ENCODE measurements at regions of chr2 and their contacts with region 1.

Region 1: GRCh38 chr2:19120941-19121750 is 237.3 kb downstream of the OSR1 start:
- DNase-seq: peak; percentile 51 to 80
- H3K4me3 ChIP-seq: no peak overlapping the region
- H3K27ac ChIP-seq: peak overlapping the region; percentile 45
- H3K4me1 ChIP-seq: peaks cover 32% of the 10 kb centered on the region
- H3K27me3 ChIP-seq: no peaks in the 10 kb centered on the region
- CTCF ChIP-seq: no peak

Region 2: GRCh38 chr2:18829251-18829902 is 291.8 kb before region 1 on chr2:
- CTCF ChIA-PET with region 1: interaction called, 8 read pairs
- POLR2A ChIA-PET with region 1: no interaction called
- intact Hi-C with region 1: loop called (anchors 5 kb)
- DNase-seq: peak; percentile 55 to 99
- H3K4me3 ChIP-seq: peak overlapping the region; percentile 15; the same call in 1 of the 2 replicates
- H3K27ac ChIP-seq: peak overlapping the region; percentile 82
- H3K4me1 ChIP-seq: peaks cover 86% of the 10 kb centered on the region
- H3K27me3 ChIP-seq: no peaks in the 10 kb centered on the region
- CTCF ChIP-seq: no peak

Region 3: DNA sequence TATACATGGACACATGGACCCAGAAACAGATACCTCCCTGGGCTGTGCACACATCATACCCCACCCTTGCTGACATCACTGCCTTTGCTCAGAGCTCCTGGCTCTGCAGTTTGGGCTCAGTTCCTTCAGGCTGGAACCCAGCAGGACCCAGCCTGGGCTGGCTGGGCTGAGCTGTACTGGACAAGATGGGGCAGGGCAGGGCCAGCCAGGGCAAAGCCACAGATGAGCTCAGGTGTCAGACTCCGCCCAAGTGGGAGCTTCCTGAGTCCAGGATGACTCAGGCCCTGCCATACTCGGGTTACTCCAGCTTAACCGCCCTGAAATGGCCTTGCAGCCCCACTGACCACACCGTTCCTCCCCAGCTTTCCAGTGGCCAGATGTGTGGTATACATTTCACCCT is 47.6 kb before region 1 on chr2:
- CTCF ChIA-PET with region 1: interaction called, 3 read pairs
- POLR2A ChIA-PET with region 1: no interaction called
- intact Hi-C with region 1: loop called (anchors 5 kb)
- DNase-seq: peak; percentile 84 to 87
- H3K4me3 ChIP-seq: no peak overlapping the region
- H3K27ac ChIP-seq: no peak overlapping the region; the same call in 1 of the 2 replicates
- H3K4me1 ChIP-seq: peaks cover 36% of the 10 kb centered on the region
- H3K27me3 ChIP-seq: no peaks in the 10 kb centered on the region
- CTCF ChIP-seq: no peak

Measured in PC-9 (cell line).